Activated CD4-positive, alpha-beta T cell treated with anti-CD3 and anti-CD28 coated beads, Interleukin-2, amount 10 ng/mL, durations not matched to agents 24 days and 14 days (primary cell): ENCODE measurements at regions of chr1 and their contacts with region 1.

Region 1: GRCh38 chr1:165235777-165236291 is 120.7 kb downstream of the LMX1A start:
- DNase-seq: no peak
- H3K4me3 Mint-ChIP-seq: no peak overlapping the region
- H3K27ac Mint-ChIP-seq: no peak overlapping the region
- H3K4me1 Mint-ChIP-seq: no peaks in the 10 kb centered on the region
- H3K27me3 Mint-ChIP-seq: peaks cover 57% of the 10 kb centered on the region

Region 2: DNA sequence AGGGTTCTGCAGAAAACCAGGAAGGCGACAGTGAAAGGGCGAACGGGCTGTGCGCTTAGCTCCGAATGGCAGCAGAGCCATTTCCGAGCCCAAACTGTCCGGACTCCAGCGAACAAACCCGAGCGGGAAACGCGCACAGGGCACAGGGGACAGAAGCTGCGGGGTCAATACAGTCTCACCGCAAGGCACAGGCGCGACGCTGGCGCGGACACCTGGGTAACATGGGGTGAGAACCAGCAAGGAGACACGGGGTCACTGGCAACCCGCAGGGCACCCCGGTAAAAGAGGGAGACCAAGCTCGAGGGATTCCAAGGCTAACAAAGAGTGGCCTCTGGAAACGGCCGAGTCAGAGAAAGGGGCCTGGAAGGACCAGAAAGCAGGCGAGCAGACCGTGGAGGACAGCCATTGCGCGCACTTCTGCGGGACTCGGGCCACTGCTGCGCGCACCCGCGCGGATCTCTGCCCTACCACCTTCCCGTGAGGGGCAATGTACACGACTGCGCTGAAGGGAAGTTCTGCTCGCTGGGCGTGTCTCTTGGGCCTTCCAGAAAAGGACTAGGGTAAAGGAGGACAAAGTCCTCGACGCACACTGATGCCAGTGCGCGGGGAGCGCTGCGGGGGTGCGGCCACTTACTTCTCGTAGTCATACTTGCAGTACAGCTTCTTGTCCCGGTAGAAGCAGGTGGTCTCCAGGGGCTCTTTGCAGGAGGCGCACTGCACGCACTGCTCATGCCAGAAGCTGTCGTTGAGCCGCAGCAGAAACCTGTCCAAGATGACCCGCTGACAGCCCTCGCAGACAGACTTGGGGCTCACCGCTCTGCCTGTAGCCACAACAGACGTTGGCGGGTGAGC is 116.8 kb after region 1 on chr1:
- intact Hi-C with region 1: loop called (anchors 5 kb)
- DNase-seq: no peak
- H3K4me3 Mint-ChIP-seq: no peak overlapping the region
- H3K27ac Mint-ChIP-seq: peak overlapping the region; percentile 70
- H3K4me1 Mint-ChIP-seq: no peaks in the 10 kb centered on the region
- H3K27me3 Mint-ChIP-seq: peaks cover 86% of the 10 kb centered on the region